A673 (cell line): ENCODE measurements at regions of chr20 and their contacts with region 1.

Region 1: DNA sequence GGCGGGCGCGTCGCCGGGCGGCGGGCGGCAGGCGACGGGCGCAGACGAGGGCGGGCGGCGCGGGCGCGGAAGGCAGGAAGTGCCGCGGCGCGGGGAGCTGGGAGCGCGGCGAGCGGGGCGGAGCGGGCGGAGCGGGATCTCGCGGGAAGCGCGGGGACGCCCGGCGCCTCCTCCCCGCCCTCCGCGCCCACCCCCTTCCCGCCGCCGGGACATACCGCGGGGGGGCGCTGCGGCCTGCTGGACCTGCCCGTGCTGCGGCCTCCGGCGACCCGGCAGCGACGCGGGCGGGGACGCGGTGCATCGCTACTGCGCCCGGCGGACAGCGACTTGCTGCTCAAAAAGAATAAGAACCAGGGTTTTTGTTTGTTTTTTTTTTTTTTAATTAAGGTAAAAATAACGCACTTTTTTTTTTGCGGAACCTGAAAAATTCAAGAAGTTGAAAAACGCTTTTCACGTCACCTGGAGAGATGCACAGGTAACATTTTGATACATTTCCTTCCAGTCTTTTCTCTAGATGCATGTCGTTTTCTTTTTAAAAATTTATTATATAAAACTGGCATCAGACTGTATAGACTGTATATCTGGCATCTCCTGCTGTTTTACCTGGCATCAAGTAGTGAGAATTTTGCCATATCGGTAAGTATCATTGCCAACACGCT is at the start of gene CENPB:
- DNase-seq: peak; percentile 93
- H3K4me3 ChIP-seq: peak within 1 kb of the TSS; percentile 84
- H3K27ac ChIP-seq: peak within 1 kb of the TSS; percentile 87
- H3K4me1 ChIP-seq: peaks cover 19% of the 10 kb centered on the region
- H3K27me3 ChIP-seq: no peaks in the 10 kb centered on the region
- CTCF ChIP-seq: peak; percentile 68
- total RNA-seq, gene CENPB: 101 and 108 TPM in 2 replicates

Region 2: DNA sequence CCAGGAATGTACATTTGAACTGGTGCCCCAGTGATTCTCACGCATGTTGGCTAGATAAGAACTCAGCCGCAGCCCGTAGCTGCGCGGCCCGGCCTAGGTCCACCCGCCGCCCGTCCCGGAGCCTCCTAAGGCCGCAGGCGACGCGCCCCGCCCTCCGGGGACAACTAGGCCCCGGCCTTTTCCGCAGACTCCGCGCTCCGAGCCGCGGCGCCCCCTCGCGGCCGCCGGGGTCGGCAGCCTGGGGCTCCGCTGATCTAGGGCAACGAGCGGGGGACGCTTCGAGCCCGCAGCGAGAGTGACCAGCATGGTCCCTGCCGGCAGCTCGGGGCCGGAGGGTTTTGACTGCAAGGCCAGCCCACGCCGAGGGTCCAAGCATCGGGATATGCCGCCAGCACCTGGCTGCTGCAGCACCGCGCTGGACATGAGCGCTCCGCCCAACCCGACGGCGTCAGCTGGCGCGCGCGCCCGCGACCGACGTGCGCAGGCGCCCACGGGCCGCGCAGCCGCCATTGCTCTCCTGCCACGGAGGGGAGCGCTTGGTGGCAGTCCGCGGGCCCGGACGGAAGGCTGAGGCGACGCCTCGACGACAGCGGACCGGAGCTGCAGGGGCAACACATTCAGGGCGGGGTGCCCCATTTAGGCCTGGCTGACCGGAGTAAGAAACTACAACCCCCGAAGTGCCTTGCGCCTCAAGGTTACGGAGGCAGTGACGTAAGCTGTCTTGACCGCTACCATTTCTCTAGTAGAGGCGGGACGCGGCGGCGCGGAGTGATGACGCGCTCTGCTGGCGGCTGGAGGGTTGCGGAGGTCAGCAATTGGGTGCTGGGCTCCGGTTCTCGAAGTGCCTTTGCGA is 33.5 kb after region 1 on chr20 and contains the start of gene AP5S1:
- CTCF ChIA-PET with region 1: interaction called, 7 read pairs
- POLR2A ChIA-PET with region 1: interaction called, 3 read pairs
- intact Hi-C with region 1: loop called (anchors 1 kb)
- DNase-seq: peak; percentile 95
- H3K4me3 ChIP-seq: peak within 1 kb of the TSS; percentile 73
- H3K27ac ChIP-seq: peak within 1 kb of the TSS; percentile 99
- H3K4me1 ChIP-seq: peaks cover 14% of the 10 kb centered on the region
- H3K27me3 ChIP-seq: no peaks in the 10 kb centered on the region
- CTCF ChIP-seq: peak; percentile 97
- total RNA-seq, gene AP5S1: 15.0 and 17.5 TPM in 2 replicates

Region 3: DNA sequence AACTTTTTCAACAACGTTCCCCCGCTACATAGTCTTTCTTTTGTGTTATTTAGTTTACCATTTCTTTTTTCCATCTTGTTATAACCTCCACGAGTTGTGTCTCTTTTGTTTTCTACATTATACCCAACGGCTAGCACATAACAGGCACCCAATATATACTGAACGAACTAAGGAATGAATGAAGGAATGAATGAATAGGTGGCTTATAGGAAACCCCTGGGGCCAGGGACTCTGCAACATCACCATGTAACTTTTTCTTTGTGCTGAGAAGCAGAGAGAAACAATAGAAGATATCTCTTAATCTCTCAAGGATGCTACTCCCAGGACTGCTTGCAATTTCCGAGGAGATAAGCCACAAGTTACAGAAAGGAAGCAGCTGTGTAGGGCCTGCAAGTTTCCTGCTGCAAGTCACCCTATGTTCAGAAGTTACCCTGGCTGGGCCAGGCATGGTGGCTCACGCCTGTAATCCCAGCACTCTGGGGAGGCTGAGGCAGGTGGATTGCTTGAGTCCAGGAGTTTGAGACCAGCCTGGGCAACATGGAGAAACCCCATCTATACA is 52.5 kb after region 1 on chr20:
- CTCF ChIA-PET with region 1: no interaction called
- POLR2A ChIA-PET with region 1: no interaction called
- intact Hi-C with region 1: no loop called
- DNase-seq: no peak
- H3K4me3 ChIP-seq: no peak overlapping the region
- H3K27ac ChIP-seq: no peak overlapping the region
- H3K4me1 ChIP-seq: no peaks in the 10 kb centered on the region
- H3K27me3 ChIP-seq: no peaks in the 10 kb centered on the region
- CTCF ChIP-seq: no peak